Right ventricle myocardium inferior (tissue), 1 donor: ENCODE measurements at regions of chr10 and their contacts with region 1.

Region 1: DNA sequence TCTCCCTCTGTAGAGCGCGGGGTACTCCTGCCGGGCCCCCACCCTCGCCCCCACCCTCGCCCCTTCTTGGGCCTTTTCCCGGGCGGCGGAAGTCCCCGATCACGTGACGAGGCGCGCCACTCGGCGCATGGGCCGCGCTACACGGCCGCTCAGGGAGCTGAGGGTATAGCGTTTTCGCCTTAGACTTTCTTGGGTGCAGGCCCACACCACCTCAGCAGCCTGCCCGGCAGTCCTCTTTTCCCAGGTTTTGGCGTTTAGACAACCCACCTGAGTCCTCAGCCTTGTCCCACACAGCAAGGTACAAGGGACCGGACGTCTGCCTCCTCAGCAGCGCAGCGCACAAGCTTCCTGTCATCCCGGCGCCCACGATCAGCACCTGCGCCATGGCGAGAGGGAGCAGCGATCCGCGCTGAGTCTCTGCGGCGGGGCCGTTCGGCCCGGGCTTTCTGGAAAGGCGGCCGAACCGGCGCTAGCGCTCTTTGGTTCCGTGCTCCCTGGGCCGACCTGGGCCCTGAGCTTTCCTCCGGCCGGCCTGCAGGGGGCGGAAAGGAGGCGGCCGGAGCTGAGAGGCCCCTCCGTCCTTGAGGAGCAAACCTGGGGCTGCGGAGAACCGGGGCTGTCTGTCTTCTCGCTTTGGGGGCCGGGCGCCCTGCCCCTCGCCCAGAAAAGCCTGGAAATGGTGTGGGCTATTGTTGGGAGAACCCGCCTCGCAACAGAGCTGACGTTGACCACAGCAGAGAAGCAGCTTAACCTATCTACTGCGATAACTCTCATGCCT is at the start of gene RNLS:
- DNase-seq: peak; percentile 91
- ATAC-seq: peak; percentile 97
- total RNA-seq, gene RNLS: 20.6 TPM

Region 2: GRCh38 chr10:88386821-88387773 is 195.9 kb before region 1 on chr10:
- intact Hi-C with region 1: no loop called
- DNase-seq: no peak
- ATAC-seq: peak; percentile 86

Region 3: DNA sequence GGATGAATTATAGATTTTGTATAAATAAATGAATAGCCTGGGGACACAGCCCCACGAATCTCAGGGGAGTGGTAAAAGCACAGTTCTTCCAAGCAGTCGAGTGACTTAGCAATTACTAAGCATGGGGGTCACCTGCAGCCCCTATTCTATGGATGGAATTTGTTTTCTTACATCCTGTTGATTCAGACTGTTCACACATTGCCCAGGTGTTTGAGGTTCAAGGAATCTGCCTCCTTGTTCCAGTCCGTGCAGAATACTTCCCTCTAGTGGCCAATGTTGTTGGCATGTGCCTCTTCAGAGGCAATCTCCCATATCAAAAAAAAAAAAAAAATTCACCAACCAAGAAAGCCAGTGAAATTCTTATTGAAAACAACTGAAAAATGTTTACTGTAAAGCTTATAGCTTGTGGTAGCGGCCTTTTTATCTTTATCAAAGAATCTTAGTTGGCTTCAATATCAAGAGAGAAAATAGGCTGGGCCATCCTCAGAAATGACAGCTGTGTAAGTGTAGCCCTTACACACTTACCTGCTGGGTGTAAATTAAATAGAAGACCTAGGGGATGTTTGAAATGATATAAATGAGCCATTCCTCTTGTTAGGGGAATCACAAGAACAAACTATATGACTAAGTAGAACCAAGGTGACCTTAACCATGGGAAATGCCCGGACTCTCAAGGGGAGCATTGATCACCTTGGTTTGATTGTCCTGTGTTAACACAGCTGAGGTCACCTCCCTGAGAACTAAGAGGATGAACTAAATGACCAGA is 227.4 kb after region 1 on chr10:
- intact Hi-C with region 1: loop called (anchors 2 kb)
- DNase-seq: no peak
- ATAC-seq: no peak